K562 (cell line): ENCODE measurements at regions of chr20 and their contacts with region 1.

Region 1: DNA sequence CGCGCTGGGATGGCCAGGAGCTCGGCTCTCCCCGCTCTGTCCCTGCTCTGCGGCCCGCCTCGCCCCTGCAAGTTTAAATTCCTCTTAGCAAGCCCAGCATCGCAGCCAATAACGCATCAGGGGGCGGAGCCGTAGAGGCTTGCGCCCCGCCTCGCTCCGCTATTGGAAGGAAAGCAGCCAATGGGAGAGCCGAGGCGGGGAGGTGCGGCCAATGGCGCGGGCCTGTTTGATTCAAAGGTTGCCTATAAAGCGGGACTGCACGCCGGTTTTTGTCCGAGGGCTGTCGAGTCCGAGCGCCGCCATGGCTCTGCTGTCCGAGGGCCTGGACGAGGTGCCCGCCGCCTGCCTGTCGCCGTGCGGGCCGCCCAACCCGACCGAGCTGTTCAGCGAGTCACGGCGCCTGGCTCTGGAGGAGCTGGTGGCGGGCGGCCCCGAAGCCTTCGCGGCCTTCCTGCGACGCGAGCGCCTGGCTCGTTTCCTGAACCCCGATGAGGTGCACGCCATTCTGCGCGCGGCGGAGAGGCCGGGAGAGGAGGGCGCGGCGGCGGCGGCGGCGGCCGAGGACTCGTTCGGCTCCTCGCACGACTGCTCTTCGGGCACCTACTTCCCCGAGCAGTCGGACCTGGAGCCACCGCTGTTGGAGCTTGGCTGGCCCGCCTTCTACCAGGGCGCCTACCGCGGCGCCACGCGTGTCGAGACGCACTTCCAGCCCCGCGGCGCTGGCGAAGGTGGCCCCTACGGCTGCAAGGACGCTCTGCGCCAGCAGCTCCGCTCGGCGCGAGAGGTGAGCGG is at the start of gene FAM83D:
- DNase-seq: peak; percentile 98 to 100 (median 99)
- ATAC-seq: peak; percentile 96
- H3K4me3 ChIP-seq: peak within 1 kb of the TSS; percentile 98
- H3K27ac ChIP-seq: peak within 1 kb of the TSS; percentile 94
- H3K4me1 ChIP-seq: peaks cover 17 to 18% of the 10 kb centered on the region in 2 experiments; a peak in 4 of 5 replicates
- H3K27me3 ChIP-seq: 0 out of 5 replicates have a peak, but pooled peaks cover 0 to under 1% of the 10 kb centered on the region in 2 experiments
- CTCF ChIP-seq: peak in 1 of 3 experiments; percentile 7; a peak in 3 of 6 replicates
- EP300 ChIP-seq: no peak
- POLR2A ChIP-seq: peak; percentile 98
- RAD21 ChIP-seq: peak in 1 of 2 experiments; percentile 96; a peak in 3 of 4 replicates
- polyA plus RNA-seq, gene FAM83D: 8.2 to 9.9 TPM

Region 2: GRCh38 chr20:38907918-38908677 is 18.2 kb before region 1 on chr20:
- CTCF ChIA-PET with region 1: no interaction called
- POLR2A ChIA-PET with region 1: interaction called, 11 read pairs
- in situ Hi-C with region 1: no loop called
- intact Hi-C with region 1: no loop called
- DNase-seq: no peak
- ATAC-seq: no peak; the same call in 2 of the 3 replicates
- H3K4me3 ChIP-seq: no peak overlapping the region
- H3K27ac ChIP-seq: no peak overlapping the region
- H3K4me1 ChIP-seq: no peaks in the 10 kb centered on the region
- H3K27me3 ChIP-seq: no peaks in the 10 kb centered on the region
- CTCF ChIP-seq: no peak
- EP300 ChIP-seq: no peak
- POLR2A ChIP-seq: no peak
- RAD21 ChIP-seq: no peak

Region 3: DNA sequence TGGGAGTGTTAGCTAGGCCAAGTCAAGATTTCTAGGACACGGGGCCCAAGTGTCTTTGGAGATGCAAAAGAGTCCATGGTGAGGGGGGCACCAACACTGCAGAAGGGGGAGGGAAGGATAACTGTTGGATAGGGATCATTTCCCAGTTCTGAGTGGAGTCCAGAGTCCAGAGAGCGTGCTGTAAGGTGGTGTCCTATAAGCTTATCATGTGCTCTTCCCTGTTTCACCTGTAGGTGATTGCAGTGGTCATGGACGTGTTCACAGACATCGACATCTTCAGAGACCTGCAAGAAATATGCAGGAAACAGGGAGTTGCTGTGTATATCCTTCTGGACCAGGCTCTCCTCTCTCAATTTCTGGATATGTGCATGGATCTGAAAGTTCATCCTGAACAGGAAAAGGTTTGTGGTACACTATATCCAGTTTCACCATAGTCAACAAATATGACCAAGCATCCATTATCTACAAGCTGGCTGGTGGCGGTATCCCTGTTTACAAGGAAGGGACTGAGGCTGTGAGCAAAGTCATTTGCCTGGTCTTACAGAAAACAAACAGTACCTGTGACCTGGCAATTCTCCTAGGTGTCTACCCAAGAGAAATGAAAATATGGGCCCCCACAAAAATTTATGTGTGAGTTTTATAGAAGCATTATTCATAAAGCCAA is 15.5 kb after region 1 on chr20:
- CTCF ChIA-PET with region 1: no interaction called
- POLR2A ChIA-PET with region 1: interaction called, 23 read pairs
- in situ Hi-C with region 1: no loop called
- intact Hi-C with region 1: no loop called
- DNase-seq: no peak
- ATAC-seq: peak; percentile 47
- H3K4me3 ChIP-seq: no peak overlapping the region
- H3K27ac ChIP-seq: no peak overlapping the region; the same call in 2 of the 3 replicates
- H3K4me1 ChIP-seq: peaks cover 6 to 27% of the 10 kb centered on the region in 2 experiments
- H3K27me3 ChIP-seq: no peaks in the 10 kb centered on the region
- CTCF ChIP-seq: no peak
- EP300 ChIP-seq: no peak
- POLR2A ChIP-seq: no peak
- RAD21 ChIP-seq: no peak

Region 4: DNA sequence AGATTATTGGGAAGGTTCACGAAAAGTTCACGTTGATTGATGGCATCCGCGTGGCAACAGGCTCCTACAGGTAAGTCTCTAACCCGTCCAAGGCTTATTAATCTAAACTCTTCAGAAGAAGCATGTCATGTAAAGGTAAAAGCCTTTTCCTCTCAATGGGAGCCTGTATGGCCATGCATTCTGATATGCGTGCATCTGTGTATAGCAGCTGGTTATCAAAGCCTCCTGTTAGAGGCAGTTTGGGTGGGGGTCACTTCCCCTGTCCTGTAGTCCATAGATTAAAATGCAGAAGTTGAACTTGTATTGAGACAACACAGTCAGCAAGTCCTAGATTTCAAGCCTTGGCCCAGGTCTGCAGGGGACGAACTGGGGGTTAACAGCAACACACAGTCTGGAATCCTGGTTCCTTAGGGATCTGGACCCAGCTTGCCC is 21.6 kb after region 1 on chr20:
- CTCF ChIA-PET with region 1: no interaction called
- POLR2A ChIA-PET with region 1: interaction called, 16 read pairs
- in situ Hi-C with region 1: no loop called
- intact Hi-C with region 1: no loop called
- DNase-seq: peak; percentile 58 to 92 (median 74)
- ATAC-seq: peak; percentile 86
- H3K4me3 ChIP-seq: no peak overlapping the region
- H3K27ac ChIP-seq: peak overlapping the region; percentile 86
- H3K4me1 ChIP-seq: peaks cover 21 to 36% of the 10 kb centered on the region in 2 experiments
- H3K27me3 ChIP-seq: no peaks in the 10 kb centered on the region
- CTCF ChIP-seq: no peak
- EP300 ChIP-seq: peak; percentile 99
- POLR2A ChIP-seq: peak; percentile 36; the same call in 1 of the 2 replicates
- RAD21 ChIP-seq: no peak

Region 5: DNA sequence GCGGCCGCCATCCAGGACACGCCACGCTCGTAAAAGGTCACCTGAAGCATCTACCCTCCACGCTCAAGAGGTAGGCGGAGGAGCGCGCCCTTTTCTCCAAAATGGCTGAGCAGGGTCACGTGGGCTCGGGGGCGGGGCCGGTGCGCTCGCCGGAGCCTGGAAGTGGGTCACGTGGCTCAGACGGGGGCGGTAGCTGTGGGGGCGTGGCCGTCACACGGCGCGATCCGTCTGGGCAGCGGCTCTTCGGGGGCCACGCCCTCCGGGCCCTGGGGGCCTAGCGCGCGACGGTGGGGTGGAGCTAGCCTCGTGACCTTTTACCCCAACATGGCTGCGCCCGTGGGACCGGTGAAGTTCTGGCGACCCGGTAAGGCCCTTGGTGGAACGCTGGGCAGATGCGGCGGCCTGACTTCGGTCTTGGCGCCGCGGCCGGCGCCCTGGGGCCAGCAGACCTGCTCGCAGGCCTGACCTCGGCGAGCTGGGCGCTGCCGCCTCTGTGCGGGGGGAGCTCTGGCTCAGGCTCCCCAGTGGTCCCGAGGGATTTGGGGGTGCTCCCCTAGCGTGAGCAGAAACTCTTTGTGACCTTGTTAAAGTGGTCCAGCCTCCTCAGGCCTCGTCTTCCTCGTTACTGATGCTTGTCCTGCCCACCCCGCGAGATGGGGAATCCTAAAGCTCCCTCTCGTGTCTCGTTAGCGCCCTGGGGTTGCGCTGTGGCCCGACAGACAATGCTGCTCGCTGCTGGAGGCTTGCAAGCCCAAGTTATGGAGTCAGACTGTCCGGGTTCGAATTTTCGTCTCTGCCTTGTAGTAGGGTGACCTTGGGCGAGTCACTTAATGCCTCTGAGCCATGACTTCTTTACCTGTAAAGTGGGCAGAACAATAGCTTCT is 35.9 kb after region 1 on chr20 and contains the start of gene DHX35:
- CTCF ChIA-PET with region 1: interaction called, 10 read pairs
- POLR2A ChIA-PET with region 1: interaction called, 46 read pairs
- in situ Hi-C with region 1: no loop called
- intact Hi-C with region 1: loop called (anchors 1 kb)
- DNase-seq: peak; percentile 98 to 99 (median 99)
- ATAC-seq: peak; percentile 97
- H3K4me3 ChIP-seq: peak within 1 kb of the TSS; percentile 92
- H3K27ac ChIP-seq: peak within 1 kb of the TSS; percentile 94
- H3K4me1 ChIP-seq: peaks cover 14 to 18% of the 10 kb centered on the region in 2 experiments; a peak in 4 of 5 replicates
- H3K27me3 ChIP-seq: no peaks in the 10 kb centered on the region
- CTCF ChIP-seq: peak; percentile 65 to 77 (median 71)
- EP300 ChIP-seq: no peak
- POLR2A ChIP-seq: peak; percentile 90
- RAD21 ChIP-seq: peak; percentile 71 to 80
- polyA plus RNA-seq, gene DHX35: 6.5 to 12.0 TPM

Region 6: GRCh38 chr20:38997622-38998021 is 71.3 kb after region 1 on chr20:
- CTCF ChIA-PET with region 1: no interaction called
- POLR2A ChIA-PET with region 1: interaction called, 6 read pairs
- in situ Hi-C with region 1: no loop called
- intact Hi-C with region 1: loop called (anchors 1 kb)
- DNase-seq: peak; percentile 62 to 86 (median 71)
- ATAC-seq: peak; percentile 96
- H3K4me3 ChIP-seq: no peak overlapping the region
- H3K27ac ChIP-seq: peak overlapping the region; percentile 21; the same call in 1 of the 3 replicates
- H3K4me1 ChIP-seq: peaks cover 17 to 29% of the 10 kb centered on the region in 2 experiments; a peak in 4 of 5 replicates
- H3K27me3 ChIP-seq: no peaks in the 10 kb centered on the region
- CTCF ChIP-seq: peak; percentile 62 to 71 (median 66)
- EP300 ChIP-seq: no peak
- POLR2A ChIP-seq: no peak
- RAD21 ChIP-seq: peak; percentile 10 to 66; a peak in 3 of 4 replicates

Region 7: GRCh38 chr20:39049684-39050554 is 123.6 kb after region 1 on chr20:
- CTCF ChIA-PET with region 1: interaction called, 25 read pairs
- POLR2A ChIA-PET with region 1: interaction called, 12 read pairs
- in situ Hi-C with region 1: no loop called
- intact Hi-C with region 1: loop called (anchors 1 kb)
- DNase-seq: peak; percentile 80 to 89 (median 87)
- ATAC-seq: peak; percentile 94
- H3K4me3 ChIP-seq: peak overlapping the region; percentile 55
- H3K27ac ChIP-seq: peak overlapping the region; percentile 65
- H3K4me1 ChIP-seq: peaks cover 8 to 16% of the 10 kb centered on the region in 2 experiments
- H3K27me3 ChIP-seq: peaks cover 0 to 6% of the 10 kb centered on the region in 2 experiments; a peak in 3 of 5 replicates
- CTCF ChIP-seq: peak; percentile 96 to 97 (median 96)
- EP300 ChIP-seq: no peak
- POLR2A ChIP-seq: peak; percentile 76
- RAD21 ChIP-seq: peak; percentile 88 to 93